ENCODE measurements at regions of chr2 and their contacts with region 1.

Region 1: DNA sequence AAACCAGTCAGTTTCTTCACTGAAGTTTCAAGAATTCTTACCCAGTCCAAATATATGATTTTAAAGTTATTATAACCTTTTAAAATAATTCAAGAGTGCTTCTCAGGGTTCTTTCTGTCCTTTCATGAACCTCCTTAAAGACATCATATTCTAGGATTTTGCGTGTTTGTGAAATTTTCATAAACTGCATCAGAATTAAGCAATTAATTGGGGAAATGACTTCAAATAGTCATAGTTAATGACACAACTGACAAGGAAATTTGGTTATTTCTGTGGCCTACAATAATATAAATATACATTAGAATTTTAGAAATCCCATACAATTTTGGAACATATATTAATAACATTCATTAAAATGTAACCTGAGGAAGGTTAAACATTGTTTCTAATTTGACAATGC is 10.5 kb downstream of the CYP27A1 start:
- DNase-seq: no peak
- H3K4me3 ChIP-seq: no peak overlapping the region
- H3K27ac ChIP-seq: no peak overlapping the region
- H3K4me1 ChIP-seq: no peaks in the 10 kb centered on the region
- H3K27me3 ChIP-seq: no peaks in the 10 kb centered on the region
- CTCF ChIP-seq: no peak

Region 2: GRCh38 chr2:218756599-218757377 is 35.6 kb before region 1 on chr2:
- CTCF ChIA-PET with region 1: no interaction called
- dilution Hi-C with region 1: no loop called
- in situ Hi-C with region 1: no loop called
- intact Hi-C with region 1: no loop called
- DNase-seq: no peak
- H3K4me3 ChIP-seq: no peak overlapping the region
- H3K27ac ChIP-seq: no peak overlapping the region
- H3K4me1 ChIP-seq: peaks cover 22% of the 10 kb centered on the region
- H3K27me3 ChIP-seq: no peaks in the 10 kb centered on the region
- CTCF ChIP-seq: no peak

Region 3: DNA sequence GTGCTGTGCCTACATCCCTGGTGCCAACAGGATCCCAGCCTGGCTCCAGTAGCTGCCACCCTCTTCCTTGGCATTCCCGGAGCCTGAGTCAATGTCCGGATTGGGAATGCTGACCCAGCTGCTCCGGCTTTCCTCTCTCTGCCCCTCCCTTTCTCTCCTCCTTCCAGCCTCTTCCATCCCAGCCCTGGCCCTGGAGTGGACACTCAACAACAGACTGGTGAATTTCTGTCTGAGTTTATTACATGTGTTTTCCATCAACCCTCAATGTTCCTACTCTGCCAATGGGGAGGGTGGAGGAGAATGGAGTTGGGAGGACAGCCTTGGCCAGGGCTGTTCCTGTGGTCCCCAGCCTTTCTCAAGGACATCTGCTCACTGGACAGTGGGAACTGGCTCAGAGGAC is 40.1 kb after region 1 on chr2:
- CTCF ChIA-PET with region 1: no interaction called
- dilution Hi-C with region 1: loop called (anchors 5 kb)
- in situ Hi-C with region 1: no loop called
- intact Hi-C with region 1: no loop called
- DNase-seq: no peak
- H3K4me3 ChIP-seq: no peak overlapping the region
- H3K27ac ChIP-seq: no peak overlapping the region
- H3K4me1 ChIP-seq: peaks cover 12% of the 10 kb centered on the region
- H3K27me3 ChIP-seq: no peaks in the 10 kb centered on the region
- CTCF ChIP-seq: no peak